ENCODE measurements at regions of chr15 and their contacts with region 1.

Region 1: DNA sequence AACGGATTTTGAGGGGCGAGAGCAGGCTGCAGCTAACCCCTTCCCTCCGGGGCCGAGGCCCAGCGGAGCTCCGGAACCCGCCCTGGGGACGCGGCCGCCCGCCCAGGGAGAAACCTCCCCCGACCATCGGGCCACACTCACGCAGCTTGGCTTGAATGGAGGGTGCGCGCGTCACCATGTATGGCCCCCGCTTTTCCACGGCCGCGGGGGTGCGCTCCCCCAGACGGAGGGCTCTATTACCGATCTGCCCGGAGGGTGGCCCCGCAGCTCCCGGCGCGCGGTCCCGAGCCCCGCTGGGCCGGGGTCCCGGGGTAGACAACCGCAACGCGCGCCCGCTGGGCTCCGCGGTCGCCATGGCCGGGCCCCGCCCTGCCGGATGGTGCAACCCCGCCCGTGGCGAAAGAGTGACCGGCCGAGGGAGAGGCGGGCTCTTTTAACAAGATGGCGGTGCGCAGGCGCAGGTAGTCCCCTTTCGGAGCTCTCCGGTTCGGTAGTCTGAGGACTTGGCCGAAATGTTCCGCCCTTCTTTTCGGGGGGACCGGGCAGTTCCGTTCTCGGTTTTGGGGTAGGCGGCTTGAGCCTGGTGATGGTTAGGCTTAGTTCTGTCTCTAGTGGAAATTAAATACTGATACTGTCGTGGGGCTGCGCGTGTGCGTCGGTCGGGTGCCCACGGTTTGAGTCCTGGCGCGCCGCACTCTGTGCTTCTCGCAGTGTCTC is at the start of gene FAM219B:
- DNase-seq: peak; percentile 78
- ATAC-seq: peak; percentile 93
- H3K4me3 ChIP-seq: peak within 1 kb of the TSS; percentile 85 to 91 (median 88)
- H3K27ac ChIP-seq: peak within 1 kb of the TSS; percentile 76
- H3K4me1 ChIP-seq: peaks cover 31% of the 10 kb centered on the region
- H3K27me3 ChIP-seq: no peaks in the 10 kb centered on the region; a peak in 1 of 5 replicates
- CTCF ChIP-seq: peak; percentile 8; the same call in 1 of the 2 replicates
- EP300 ChIP-seq: no peak
- POLR2A ChIP-seq: peak; percentile 43 to 85; a peak in 3 of 4 replicates
- RAD21 ChIP-seq: no peak; the same call in 1 of the 2 replicates
- total RNA-seq, gene FAM219B: 18.0 and 36.6 TPM in 2 replicates

Region 2: DNA sequence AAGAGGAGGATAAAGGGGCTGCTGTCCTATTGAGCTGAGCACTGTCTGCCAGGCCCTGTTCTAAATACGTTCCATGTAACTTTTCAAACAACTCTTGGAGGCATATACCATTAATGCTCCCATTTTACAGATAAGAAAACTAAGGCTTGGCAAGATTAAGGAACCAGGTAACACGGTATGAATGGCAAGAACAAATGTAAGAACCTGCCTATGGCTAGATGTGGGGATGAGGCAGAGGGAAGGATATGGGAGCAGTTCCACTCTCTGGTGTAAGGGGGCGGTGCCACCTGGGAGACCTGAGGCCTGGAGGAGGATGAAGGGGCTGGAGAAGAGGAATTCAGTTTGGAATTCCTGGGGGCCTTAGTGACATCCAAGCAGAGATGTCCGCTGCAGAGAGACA is 97.8 kb before region 1 on chr15:
- CTCF ChIA-PET with region 1: no interaction called
- POLR2A ChIA-PET with region 1: no interaction called
- in situ Hi-C with region 1: no loop called
- intact Hi-C with region 1: no loop called
- DNase-seq: no peak
- ATAC-seq: peak; percentile 78
- H3K4me3 ChIP-seq: no peak overlapping the region
- H3K27ac ChIP-seq: no peak overlapping the region
- H3K4me1 ChIP-seq: peaks cover 10% of the 10 kb centered on the region
- H3K27me3 ChIP-seq: peaks cover 0 to 8% of the 10 kb centered on the region in 2 experiments; a peak in 2 of 5 replicates
- CTCF ChIP-seq: peak; percentile 25; the same call in 1 of the 2 replicates
- EP300 ChIP-seq: no peak
- POLR2A ChIP-seq: no peak
- RAD21 ChIP-seq: no peak

Region 3: GRCh38 chr15:74889883-74890664 is 16.5 kb before region 1 on chr15 and contains the start of gene MPI:
- CTCF ChIA-PET with region 1: no interaction called
- POLR2A ChIA-PET with region 1: interaction called, 23 read pairs
- in situ Hi-C with region 1: no loop called
- intact Hi-C with region 1: no loop called
- DNase-seq: peak; percentile 75
- ATAC-seq: peak; percentile 96
- H3K4me3 ChIP-seq: peak within 1 kb of the TSS; percentile 73 to 99 (median 94)
- H3K27ac ChIP-seq: peak within 1 kb of the TSS; percentile 70
- H3K4me1 ChIP-seq: peaks cover 31% of the 10 kb centered on the region
- H3K27me3 ChIP-seq: no peaks in the 10 kb centered on the region; a peak in 1 of 5 replicates
- CTCF ChIP-seq: no peak
- EP300 ChIP-seq: no peak
- POLR2A ChIP-seq: peak; percentile 92 to 98
- RAD21 ChIP-seq: peak; percentile 36; the same call in 1 of the 2 replicates
- total RNA-seq, gene MPI: 36.9 and 49.7 TPM in 2 replicates

Region 4: GRCh38 chr15:74937596-74938296 is 31.1 kb after region 1 on chr15 and contains the start of gene COX5A:
- CTCF ChIA-PET with region 1: no interaction called
- POLR2A ChIA-PET with region 1: interaction called, 16 read pairs
- in situ Hi-C with region 1: no loop called
- intact Hi-C with region 1: no loop called
- DNase-seq: peak; percentile 85
- ATAC-seq: peak; percentile 97
- H3K4me3 ChIP-seq: peak within 1 kb of the TSS; percentile 70 to 86 (median 72)
- H3K27ac ChIP-seq: peak within 1 kb of the TSS; percentile 98
- H3K4me1 ChIP-seq: peaks cover 59% of the 10 kb centered on the region
- H3K27me3 ChIP-seq: peaks cover 0 to 3% of the 10 kb centered on the region in 2 experiments; a peak in 2 of 5 replicates
- CTCF ChIP-seq: peak; percentile 23; the same call in 1 of the 2 replicates
- EP300 ChIP-seq: no peak
- POLR2A ChIP-seq: peak; percentile 79 to 95
- RAD21 ChIP-seq: no peak; the same call in 1 of the 2 replicates
- total RNA-seq, gene COX5A: 217 and 218 TPM in 2 replicates

Region 5: DNA sequence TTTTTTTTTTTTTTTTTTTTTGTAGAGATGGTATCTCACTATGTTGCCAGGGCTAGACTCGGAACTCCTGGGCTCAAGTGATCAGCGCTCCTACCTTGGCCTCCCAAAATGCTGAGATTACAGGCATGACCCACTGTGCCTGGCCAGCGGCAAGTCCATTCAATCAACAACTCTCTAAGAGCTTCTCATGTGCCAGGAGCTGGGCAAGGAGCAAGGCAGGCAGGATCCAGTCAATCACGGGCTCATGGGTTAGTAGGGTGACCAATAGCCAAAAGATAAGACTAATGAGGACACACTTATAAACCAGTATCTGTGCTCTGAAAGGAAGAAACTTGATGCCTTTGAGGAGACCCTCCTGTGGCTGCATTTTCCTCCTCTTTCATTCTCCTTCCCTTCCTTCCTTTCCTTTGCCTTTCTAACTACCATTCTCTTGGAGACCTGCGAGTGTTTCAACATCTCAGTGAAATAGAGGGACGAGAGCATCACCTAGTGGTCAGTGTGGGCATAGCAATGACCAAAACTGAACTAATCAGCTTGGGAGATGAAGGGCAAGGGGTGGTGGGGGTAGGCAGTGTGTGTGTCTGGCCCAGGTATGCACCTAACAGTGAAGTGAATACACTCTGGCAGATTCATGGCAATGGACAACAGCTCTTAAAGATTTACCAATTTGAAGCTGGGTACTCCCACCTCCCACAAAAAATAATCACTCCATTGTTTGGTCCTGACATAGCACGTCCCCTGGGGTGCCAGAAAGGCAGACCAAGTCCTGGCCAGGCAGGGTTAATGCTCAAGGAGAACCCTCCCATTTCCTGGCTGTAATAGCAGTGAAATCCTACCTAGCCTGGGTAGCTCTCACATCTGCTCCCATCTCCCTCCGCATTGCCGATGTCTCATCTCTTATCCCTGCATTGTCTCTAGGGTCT is 43.7 kb after region 1 on chr15:
- CTCF ChIA-PET with region 1: interaction called, 6 read pairs
- POLR2A ChIA-PET with region 1: no interaction called
- in situ Hi-C with region 1: no loop called
- intact Hi-C with region 1: loop called (anchors 5 kb)
- DNase-seq: peak; percentile 73
- ATAC-seq: peak; percentile 76
- H3K4me3 ChIP-seq: no peak overlapping the region; a peak in 1 of 6 replicates
- H3K27ac ChIP-seq: no peak overlapping the region
- H3K4me1 ChIP-seq: peaks cover 17% of the 10 kb centered on the region
- H3K27me3 ChIP-seq: peaks cover 0 to 15% of the 10 kb centered on the region in 2 experiments; a peak in 3 of 5 replicates
- CTCF ChIP-seq: peak; percentile 97
- EP300 ChIP-seq: no peak
- POLR2A ChIP-seq: no peak
- RAD21 ChIP-seq: peak; percentile 80

Region 6: DNA sequence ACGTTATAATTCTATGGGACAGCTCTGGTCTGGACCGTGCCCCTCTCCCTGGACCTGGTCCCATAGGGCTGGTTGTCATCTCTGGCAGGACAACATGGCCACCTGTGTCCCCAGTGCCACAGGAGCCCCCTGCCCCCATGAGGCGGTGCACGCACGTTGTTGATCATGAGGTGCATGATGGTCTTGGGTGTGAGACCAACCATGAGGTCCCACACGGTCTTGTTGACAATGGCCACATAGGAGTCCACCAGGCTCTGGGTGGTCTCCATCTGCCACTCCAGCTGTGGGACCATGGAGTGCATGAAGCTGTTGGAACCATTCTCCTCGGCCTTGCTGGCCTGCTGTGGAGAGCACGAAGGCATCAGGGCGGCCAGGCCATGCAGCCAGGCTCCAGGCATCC is 395.7 kb after region 1 on chr15:
- CTCF ChIA-PET with region 1: no interaction called
- POLR2A ChIA-PET with region 1: no interaction called
- in situ Hi-C with region 1: no loop called
- intact Hi-C with region 1: no loop called
- DNase-seq: no peak
- ATAC-seq: no peak
- H3K4me3 ChIP-seq: no peak overlapping the region
- H3K27ac ChIP-seq: no peak overlapping the region
- H3K4me1 ChIP-seq: no peaks in the 10 kb centered on the region
- H3K27me3 ChIP-seq: peaks cover 0 to 13% of the 10 kb centered on the region in 2 experiments; a peak in 3 of 5 replicates
- CTCF ChIP-seq: no peak
- EP300 ChIP-seq: no peak
- POLR2A ChIP-seq: no peak
- RAD21 ChIP-seq: no peak

Measured in HepG2 (cell line).